A673 (cell line): ENCODE measurements at regions of chr2 and their contacts with region 1.

Region 1: DNA sequence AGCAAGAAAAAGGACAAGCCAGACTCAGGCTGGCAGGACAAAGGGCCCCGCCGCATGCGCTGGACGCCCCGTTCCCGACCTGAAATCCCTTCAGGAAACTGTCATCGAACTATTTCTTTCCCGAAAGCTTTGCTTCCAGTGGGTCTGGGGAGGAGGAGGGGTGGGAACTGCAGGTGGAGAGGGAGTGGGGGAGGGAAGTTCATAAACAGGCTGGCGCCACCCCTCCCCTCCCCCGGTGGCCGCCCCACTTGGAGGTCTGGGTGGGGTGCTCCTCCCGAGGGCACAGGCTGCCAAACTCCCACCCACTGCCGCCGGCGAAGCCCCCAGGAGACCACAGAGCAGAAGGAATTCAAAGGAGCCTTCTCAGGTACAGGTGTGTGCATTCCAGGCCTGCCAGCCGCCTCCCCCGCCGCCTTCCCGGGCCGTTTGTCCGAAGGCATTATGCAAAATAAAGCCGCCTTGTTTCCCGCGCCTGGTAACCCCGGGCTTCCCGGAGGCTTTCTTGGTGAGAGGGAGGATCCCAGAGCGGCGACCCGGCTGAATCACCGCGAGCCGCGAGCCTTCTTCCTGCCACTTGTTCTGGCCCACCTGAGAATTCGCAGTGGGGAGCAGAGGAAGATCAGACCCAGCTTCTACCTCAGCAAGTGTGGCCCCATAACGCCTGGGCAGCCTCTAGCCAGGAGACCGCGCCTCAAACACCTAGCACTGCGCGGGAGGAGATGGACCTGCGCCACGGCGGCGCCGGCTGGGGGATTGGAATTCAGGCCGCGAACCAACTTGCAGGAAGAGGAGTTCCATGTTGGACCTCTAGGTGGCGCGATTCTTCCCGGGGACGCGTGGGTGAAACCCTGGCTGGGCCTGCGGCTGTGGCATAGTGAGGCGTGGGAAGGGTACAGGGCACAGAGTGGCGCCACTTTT is 101.9 kb downstream of the FOXI3 start:
- DNase-seq: peak; percentile 67
- H3K4me3 ChIP-seq: no peak overlapping the region
- H3K27ac ChIP-seq: no peak overlapping the region
- H3K4me1 ChIP-seq: no peaks in the 10 kb centered on the region
- H3K27me3 ChIP-seq: no peaks in the 10 kb centered on the region
- CTCF ChIP-seq: peak; percentile 90

Region 2: GRCh38 chr2:88372042-88372441 is 21.5 kb after region 1 on chr2:
- CTCF ChIA-PET with region 1: no interaction called
- POLR2A ChIA-PET with region 1: no interaction called
- intact Hi-C with region 1: loop called (anchors 2 kb)
- DNase-seq: no peak
- H3K4me3 ChIP-seq: no peak overlapping the region
- H3K27ac ChIP-seq: no peak overlapping the region
- H3K4me1 ChIP-seq: no peaks in the 10 kb centered on the region
- H3K27me3 ChIP-seq: no peaks in the 10 kb centered on the region
- CTCF ChIP-seq: no peak

Region 3: GRCh38 chr2:88489200-88489599 is 138.6 kb after region 1 on chr2:
- CTCF ChIA-PET with region 1: no interaction called
- POLR2A ChIA-PET with region 1: no interaction called
- intact Hi-C with region 1: no loop called
- DNase-seq: no peak
- H3K4me3 ChIP-seq: no peak overlapping the region
- H3K27ac ChIP-seq: no peak overlapping the region
- H3K4me1 ChIP-seq: no peaks in the 10 kb centered on the region
- H3K27me3 ChIP-seq: peaks cover 8% of the 10 kb centered on the region
- CTCF ChIP-seq: no peak; the same call in 1 of the 2 replicates